HCT116 (cell line): ENCODE measurements at regions of chr4 and their contacts with region 1.

Region 1: GRCh38 chr4:24488399-24489164 is 95.8 kb downstream of the DHX15 start:
- DNase-seq: peak; percentile 41
- ATAC-seq: peak; percentile 99
- H3K4me3 ChIP-seq: no peak overlapping the region
- H3K27ac ChIP-seq: no peak overlapping the region
- H3K4me1 ChIP-seq: no peaks in the 10 kb centered on the region
- H3K27me3 ChIP-seq: no peaks in the 10 kb centered on the region
- CTCF ChIP-seq: peak; percentile 69 to 95 (median 89)
- POLR2A ChIP-seq: no peak
- RAD21 ChIP-seq: peak; percentile 78

Region 2: DNA sequence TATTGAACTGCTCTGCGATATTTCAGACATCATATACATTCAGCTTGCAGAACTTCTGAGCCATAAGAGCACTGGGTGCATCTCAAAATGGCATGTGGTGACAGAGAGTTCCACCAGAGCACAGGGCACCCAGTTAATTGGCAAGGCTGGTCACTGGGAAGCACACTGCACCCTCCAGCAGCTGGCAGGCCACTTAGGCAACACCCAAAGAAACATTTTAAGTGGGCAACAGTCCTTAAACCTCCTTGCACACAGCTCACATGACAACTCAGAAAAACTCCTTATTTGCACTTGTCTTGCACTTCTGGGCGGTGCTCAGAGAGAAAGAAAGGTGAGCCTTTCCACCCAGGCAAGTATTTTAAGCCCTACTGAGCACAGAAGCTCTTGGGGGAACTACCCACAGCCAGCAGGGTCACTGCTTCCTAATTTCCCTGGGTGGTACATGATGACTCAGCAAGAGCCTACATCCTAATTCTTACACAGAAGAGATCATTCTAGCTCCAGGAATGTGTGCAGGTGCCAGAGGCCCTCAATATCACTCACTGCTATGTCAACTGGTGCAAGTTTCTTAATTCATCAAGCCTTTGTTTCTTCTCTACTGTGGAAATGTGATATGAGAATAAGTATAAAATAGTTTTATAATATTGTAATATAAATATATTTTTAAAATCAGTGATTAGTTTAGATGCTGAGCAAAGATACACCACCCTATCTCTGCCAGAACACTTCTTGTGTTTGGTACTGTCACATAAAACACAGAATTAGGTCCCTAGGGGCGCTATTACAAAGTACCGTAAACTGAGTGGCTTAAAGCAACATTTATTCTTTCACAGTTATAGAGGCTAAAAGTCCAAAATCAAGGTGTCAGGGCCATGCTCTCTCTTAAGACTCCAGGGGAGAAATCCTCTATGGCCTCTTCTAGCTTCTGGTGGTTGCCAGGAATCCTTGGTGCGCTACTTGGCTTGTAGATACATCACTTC is 443.7 kb before region 1 on chr4:
- CTCF ChIA-PET with region 1: no interaction called
- POLR2A ChIA-PET with region 1: no interaction called
- RAD21 ChIA-PET with region 1: no interaction called
- intact Hi-C with region 1: no loop called
- DNase-seq: no peak
- ATAC-seq: no peak
- H3K4me3 ChIP-seq: no peak overlapping the region
- H3K27ac ChIP-seq: no peak overlapping the region
- H3K4me1 ChIP-seq: no peaks in the 10 kb centered on the region
- H3K27me3 ChIP-seq: no peaks in the 10 kb centered on the region
- CTCF ChIP-seq: no peak
- POLR2A ChIP-seq: no peak
- RAD21 ChIP-seq: no peak

Region 3: GRCh38 chr4:24594891-24595290 is 106.3 kb after region 1 on chr4:
- CTCF ChIA-PET with region 1: no interaction called
- POLR2A ChIA-PET with region 1: no interaction called
- RAD21 ChIA-PET with region 1: no interaction called
- intact Hi-C with region 1: no loop called
- DNase-seq: no peak
- ATAC-seq: no peak
- H3K4me3 ChIP-seq: no peak overlapping the region
- H3K27ac ChIP-seq: no peak overlapping the region
- H3K4me1 ChIP-seq: peaks cover 6 to 35% of the 10 kb centered on the region in 2 experiments; a peak in 3 of 4 replicates
- H3K27me3 ChIP-seq: no peaks in the 10 kb centered on the region
- CTCF ChIP-seq: no peak
- POLR2A ChIP-seq: no peak
- RAD21 ChIP-seq: no peak

Region 4: GRCh38 chr4:24686871-24687680 is 198.5 kb after region 1 on chr4:
- CTCF ChIA-PET with region 1: interaction called, 8 read pairs
- POLR2A ChIA-PET with region 1: no interaction called
- RAD21 ChIA-PET with region 1: no interaction called
- intact Hi-C with region 1: loop called (anchors 1 kb)
- DNase-seq: peak; percentile 36
- ATAC-seq: peak; percentile 95
- H3K4me3 ChIP-seq: peak overlapping the region in 1 of 2 experiments; percentile 12; a peak in 1 of 4 replicates
- H3K27ac ChIP-seq: no peak overlapping the region
- H3K4me1 ChIP-seq: peaks cover 0 to 5% of the 10 kb centered on the region in 2 experiments; a peak in 1 of 4 replicates
- H3K27me3 ChIP-seq: peaks cover 9% of the 10 kb centered on the region; the same call in 1 of the 2 replicates
- CTCF ChIP-seq: peak; percentile 83 to 90 (median 83); a peak in 5 of 6 replicates
- POLR2A ChIP-seq: no peak
- RAD21 ChIP-seq: peak; percentile 82

Region 5: DNA sequence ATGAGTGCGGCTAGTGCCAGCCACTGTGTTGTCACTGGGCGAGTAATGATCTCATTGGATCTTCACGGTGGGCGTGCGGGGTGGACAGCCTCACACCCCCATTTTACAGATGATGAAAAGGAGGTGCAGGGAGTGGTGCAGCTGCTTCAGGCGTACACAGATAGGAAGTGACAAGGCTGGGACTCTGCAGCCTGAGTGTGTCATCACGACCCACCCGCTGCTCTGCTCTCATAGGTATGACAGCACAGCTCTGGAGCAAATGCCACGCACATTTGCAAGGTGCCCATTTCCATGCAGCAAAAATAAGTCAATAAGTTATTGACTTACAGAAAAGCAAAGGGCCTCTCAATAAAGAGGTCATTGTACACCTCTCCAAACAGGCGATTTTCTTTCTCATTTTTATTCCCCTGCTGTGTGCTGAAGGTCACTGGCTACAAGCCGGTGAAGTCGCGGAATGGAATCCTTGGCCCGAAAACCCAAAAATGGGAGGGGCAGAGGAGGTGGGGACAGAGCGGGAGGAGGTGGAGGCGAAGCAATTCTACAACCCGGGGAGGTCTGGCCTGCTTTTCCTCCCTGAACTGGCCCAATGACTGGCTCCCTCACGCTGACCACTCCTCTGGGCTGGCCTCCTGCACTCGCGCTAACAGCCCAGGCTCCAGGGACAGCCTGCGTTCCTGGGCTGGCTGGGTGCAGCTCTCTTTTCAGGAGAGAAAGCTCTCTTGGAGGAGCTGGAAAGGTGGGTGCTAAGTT is 306.5 kb after region 1 on chr4 and contains the start of gene SOD3:
- CTCF ChIA-PET with region 1: interaction called, 4 read pairs
- POLR2A ChIA-PET with region 1: no interaction called
- RAD21 ChIA-PET with region 1: no interaction called
- intact Hi-C with region 1: loop called (anchors 10 kb)
- DNase-seq: no peak
- ATAC-seq: no peak
- H3K4me3 ChIP-seq: no peak within 1 kb of the TSS
- H3K27ac ChIP-seq: no peak within 1 kb of the TSS
- H3K4me1 ChIP-seq: no peaks in the 10 kb centered on the region
- H3K27me3 ChIP-seq: peaks cover 15% of the 10 kb centered on the region; the same call in 1 of the 2 replicates
- CTCF ChIP-seq: no peak
- POLR2A ChIP-seq: no peak
- RAD21 ChIP-seq: no peak
- total RNA-seq, gene SOD3: 0.25 TPM

Region 6: DNA sequence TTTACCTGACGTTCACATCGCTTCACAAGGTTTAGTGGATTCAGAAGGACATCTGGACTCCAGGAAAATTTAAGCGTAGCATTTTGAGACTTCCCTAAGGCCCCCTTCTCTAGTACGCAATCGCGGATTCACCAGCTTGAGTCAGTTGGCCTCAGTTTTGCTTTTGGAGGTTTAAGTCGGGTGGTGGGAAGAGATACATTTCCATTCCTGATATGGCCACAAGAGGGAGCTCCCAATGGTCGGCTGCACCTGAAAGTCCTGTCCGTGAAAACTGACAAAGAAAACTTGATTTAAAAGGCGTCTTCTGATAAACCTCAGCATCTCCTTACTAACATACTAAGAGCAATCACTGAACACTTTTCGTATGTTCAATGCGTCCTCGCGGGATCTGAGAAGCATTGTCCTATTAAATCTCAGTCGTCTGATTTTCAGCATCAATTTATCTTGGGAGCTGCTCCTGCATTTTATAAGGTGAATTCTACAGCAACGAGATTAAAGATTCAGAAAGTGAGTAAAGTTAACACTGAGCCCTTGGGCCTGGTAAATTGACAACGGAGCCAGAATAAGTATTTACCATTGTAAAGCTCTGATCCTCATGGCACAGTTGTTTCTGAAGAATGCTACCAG is 491.6 kb after region 1 on chr4:
- CTCF ChIA-PET with region 1: interaction called, 6 read pairs
- POLR2A ChIA-PET with region 1: no interaction called
- RAD21 ChIA-PET with region 1: no interaction called
- intact Hi-C with region 1: loop called (anchors 2 kb)
- DNase-seq: peak; percentile 61
- ATAC-seq: peak; percentile 83
- H3K4me3 ChIP-seq: 0 out of 4 replicates have a peak overlapping the region, but pooled peaks of 1 of the 2 experiments have one; percentile 4
- H3K27ac ChIP-seq: no peak overlapping the region
- H3K4me1 ChIP-seq: peaks cover 0 to 10% of the 10 kb centered on the region in 2 experiments; a peak in 1 of 4 replicates
- H3K27me3 ChIP-seq: no peaks in the 10 kb centered on the region
- CTCF ChIP-seq: peak; percentile 68 to 88 (median 83)
- POLR2A ChIP-seq: no peak
- RAD21 ChIP-seq: peak; percentile 62